Colonic mucosa (tissue), 4 donors: ENCODE measurements at regions of chr19 and their contacts with region 1.

Region 1: DNA sequence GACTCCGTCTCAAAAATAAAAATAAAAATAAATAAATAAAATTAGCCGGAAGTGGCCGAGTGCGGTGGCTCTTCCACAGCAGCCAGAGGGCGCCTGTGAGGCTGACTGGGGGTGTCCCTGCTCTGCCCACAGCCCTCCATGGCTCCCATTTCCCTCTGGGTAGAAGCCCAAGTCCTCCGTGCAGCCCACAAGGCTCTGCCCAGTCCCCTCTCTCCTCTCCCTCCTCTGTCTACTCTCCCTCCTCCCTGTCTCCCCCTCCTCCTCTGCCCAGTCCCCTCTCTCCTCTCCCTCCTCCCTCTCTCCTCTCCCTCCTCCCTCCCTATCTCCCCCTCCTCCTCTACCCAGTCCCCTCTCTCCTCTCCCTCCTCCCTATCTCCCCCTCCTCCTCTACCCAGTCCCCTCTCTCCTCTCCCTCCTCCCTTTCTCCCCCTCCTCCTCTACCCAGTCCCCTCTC is 20.4 kb downstream of the MISP start:
- DNase-seq: no peak
- H3K4me3 ChIP-seq: no peak overlapping the region
- H3K27ac ChIP-seq: no peak overlapping the region
- H3K4me1 ChIP-seq: no peaks in the 10 kb centered on the region
- H3K27me3 ChIP-seq: no peaks in the 10 kb centered on the region
- CTCF ChIP-seq: peak; percentile 37

Region 2: GRCh38 chr19:633068-633785 is 138.1 kb before region 1 on chr19 and contains the start of gene POLRMT:
- intact Hi-C with region 1: no loop called
- DNase-seq: peak; percentile 99
- H3K4me3 ChIP-seq: peak within 1 kb of the TSS; percentile 98
- H3K27ac ChIP-seq: peak within 1 kb of the TSS; percentile 76
- H3K4me1 ChIP-seq: peaks cover 11% of the 10 kb centered on the region
- H3K27me3 ChIP-seq: no peaks in the 10 kb centered on the region
- CTCF ChIP-seq: no peak
- total RNA-seq, gene POLRMT: 50.2 to 77.3 TPM

Region 3: GRCh38 chr19:677201-677600 is 94.2 kb before region 1 on chr19:
- intact Hi-C with region 1: no loop called
- DNase-seq: peak; percentile 57
- H3K4me3 ChIP-seq: peak overlapping the region; percentile 36
- H3K27ac ChIP-seq: peak overlapping the region; percentile 62
- H3K4me1 ChIP-seq: no peaks in the 10 kb centered on the region
- H3K27me3 ChIP-seq: peaks cover 19% of the 10 kb centered on the region
- CTCF ChIP-seq: no peak

Region 4: GRCh38 chr19:850221-850978 is 79.0 kb after region 1 on chr19:
- intact Hi-C with region 1: loop called (anchors 10 kb)
- DNase-seq: peak; percentile 75
- H3K4me3 ChIP-seq: no peak overlapping the region
- H3K27ac ChIP-seq: peak overlapping the region; percentile 55
- H3K4me1 ChIP-seq: no peaks in the 10 kb centered on the region
- H3K27me3 ChIP-seq: peaks cover 43% of the 10 kb centered on the region
- CTCF ChIP-seq: no peak

Region 5: GRCh38 chr19:917323-918151 is 146.2 kb after region 1 on chr19 and contains the start of gene KISS1R:
- intact Hi-C with region 1: loop called (anchors 2 kb)
- DNase-seq: no peak
- H3K4me3 ChIP-seq: peak within 1 kb of the TSS; percentile 38
- H3K27ac ChIP-seq: no peak within 1 kb of the TSS
- H3K4me1 ChIP-seq: peaks cover 28% of the 10 kb centered on the region
- H3K27me3 ChIP-seq: peaks cover 43% of the 10 kb centered on the region
- CTCF ChIP-seq: peak; percentile 59
- total RNA-seq, gene KISS1R: 0.21 TPM in 1 of 2 donors, not detected in the other

Region 6: DNA sequence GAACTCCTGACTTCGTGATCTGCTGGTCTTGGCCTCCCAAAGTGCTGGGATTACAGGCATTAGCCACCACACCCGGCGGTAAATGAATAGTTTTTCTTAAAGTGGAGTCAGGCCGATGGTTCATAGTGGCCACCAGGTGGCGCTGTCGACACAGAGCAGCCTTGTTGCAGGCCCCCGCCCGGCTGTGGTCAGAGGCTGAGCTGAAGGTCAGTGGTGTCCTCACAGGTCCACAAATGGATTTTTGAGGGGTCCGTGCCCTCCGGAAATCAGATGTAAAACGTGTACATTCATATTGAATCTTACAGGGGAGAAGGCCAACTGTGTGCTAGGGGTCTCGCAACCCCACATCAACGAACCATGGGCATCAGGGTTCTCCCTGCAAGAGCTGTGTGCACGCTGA is 199.3 kb after region 1 on chr19:
- intact Hi-C with region 1: loop called (anchors 10 kb)
- DNase-seq: no peak
- H3K4me3 ChIP-seq: no peak overlapping the region
- H3K27ac ChIP-seq: no peak overlapping the region
- H3K4me1 ChIP-seq: no peaks in the 10 kb centered on the region
- H3K27me3 ChIP-seq: no peaks in the 10 kb centered on the region
- CTCF ChIP-seq: peak; percentile 18